Transverse colon (tissue), 4 donors: ENCODE measurements at regions of chr6 and their contacts with region 1.

Region 1: GRCh38 chr6:52664186-52664990 is 6.5 kb upstream of the TMEM14A start:
- DNase-seq: peak; percentile 94
- H3K4me3 ChIP-seq: peak overlapping the region; percentile 55 to 85 (median 77)
- H3K27ac ChIP-seq: peak overlapping the region; percentile 83 to 90 (median 85)
- H3K4me1 ChIP-seq: peaks cover 0 to 24% (median 18%) of the 10 kb centered on the region in 4 donors
- H3K27me3 ChIP-seq: no peaks in the 10 kb centered on the region
- CTCF ChIP-seq: no peak
- EP300 ChIP-seq: no peak
- POLR2A ChIP-seq: peak; percentile 94

Region 2: GRCh38 chr6:52263709-52264540 is 400.5 kb before region 1 on chr6:
- in situ Hi-C with region 1: loop called in 1 of 4 experiments (anchors 25 kb)
- intact Hi-C with region 1: no loop called
- DNase-seq: peak; percentile 58
- H3K4me3 ChIP-seq: no peak overlapping the region
- H3K27ac ChIP-seq: no peak overlapping the region
- H3K4me1 ChIP-seq: no peaks in the 10 kb centered on the region
- H3K27me3 ChIP-seq: no peaks in the 10 kb centered on the region
- CTCF ChIP-seq: peak; percentile 73 to 95 (median 91)
- EP300 ChIP-seq: no peak
- POLR2A ChIP-seq: no peak

Region 3: DNA sequence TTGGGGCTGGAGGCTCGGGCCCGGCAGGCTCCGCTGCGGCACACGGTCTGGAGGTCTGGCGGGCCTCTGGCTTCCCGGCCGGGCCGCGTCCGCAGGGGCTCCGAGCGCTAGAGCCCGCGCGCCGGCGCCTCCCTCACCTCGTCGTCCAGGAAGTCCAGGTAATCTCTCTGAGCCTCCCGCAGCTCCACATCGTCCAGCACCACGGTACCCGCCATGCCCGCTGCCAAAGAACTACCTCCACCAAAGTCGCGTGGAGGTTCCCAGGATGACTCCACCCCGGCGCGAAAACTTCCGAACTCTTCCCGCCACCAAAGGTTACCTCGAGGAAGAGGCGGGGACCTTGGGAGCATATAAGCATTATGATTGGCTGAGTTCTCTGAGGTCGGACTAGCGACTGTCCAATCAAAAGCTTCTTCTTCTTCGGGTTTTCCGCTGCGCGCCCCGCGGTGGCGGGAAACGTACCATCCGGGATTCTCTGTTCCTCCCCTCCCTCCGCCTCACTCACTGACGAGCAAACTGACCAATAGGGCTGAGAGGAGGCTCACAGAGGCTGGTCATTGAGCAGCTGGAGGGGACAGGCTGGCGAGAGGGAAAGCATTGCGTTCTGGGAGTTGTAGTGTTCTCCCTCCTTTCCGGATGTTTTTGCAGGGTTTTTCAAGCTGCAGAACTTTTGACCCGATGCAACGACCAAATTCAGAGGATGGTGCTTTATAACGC is 379.8 kb before region 1 on chr6 and contains the start of gene MCM3:
- in situ Hi-C with region 1: loop called in 3 of 4 experiments (anchors 5 to 25 kb)
- intact Hi-C with region 1: loop called (anchors 10 kb)
- DNase-seq: peak; percentile 98
- H3K4me3 ChIP-seq: peak within 1 kb of the TSS; percentile 57 to 97 (median 73)
- H3K27ac ChIP-seq: peak within 1 kb of the TSS; percentile 73 to 90 (median 82)
- H3K4me1 ChIP-seq: peaks cover 5 to 35% (median 17%) of the 10 kb centered on the region in 4 donors
- H3K27me3 ChIP-seq: no peaks in the 10 kb centered on the region
- CTCF ChIP-seq: peak in 3 of 5 experiments; percentile 5 to 57 (median 47)
- EP300 ChIP-seq: no peak
- POLR2A ChIP-seq: peak; percentile 29
- total RNA-seq, gene MCM3: 13.5 to 27.3 (median 24.2) TPM

Region 4: DNA sequence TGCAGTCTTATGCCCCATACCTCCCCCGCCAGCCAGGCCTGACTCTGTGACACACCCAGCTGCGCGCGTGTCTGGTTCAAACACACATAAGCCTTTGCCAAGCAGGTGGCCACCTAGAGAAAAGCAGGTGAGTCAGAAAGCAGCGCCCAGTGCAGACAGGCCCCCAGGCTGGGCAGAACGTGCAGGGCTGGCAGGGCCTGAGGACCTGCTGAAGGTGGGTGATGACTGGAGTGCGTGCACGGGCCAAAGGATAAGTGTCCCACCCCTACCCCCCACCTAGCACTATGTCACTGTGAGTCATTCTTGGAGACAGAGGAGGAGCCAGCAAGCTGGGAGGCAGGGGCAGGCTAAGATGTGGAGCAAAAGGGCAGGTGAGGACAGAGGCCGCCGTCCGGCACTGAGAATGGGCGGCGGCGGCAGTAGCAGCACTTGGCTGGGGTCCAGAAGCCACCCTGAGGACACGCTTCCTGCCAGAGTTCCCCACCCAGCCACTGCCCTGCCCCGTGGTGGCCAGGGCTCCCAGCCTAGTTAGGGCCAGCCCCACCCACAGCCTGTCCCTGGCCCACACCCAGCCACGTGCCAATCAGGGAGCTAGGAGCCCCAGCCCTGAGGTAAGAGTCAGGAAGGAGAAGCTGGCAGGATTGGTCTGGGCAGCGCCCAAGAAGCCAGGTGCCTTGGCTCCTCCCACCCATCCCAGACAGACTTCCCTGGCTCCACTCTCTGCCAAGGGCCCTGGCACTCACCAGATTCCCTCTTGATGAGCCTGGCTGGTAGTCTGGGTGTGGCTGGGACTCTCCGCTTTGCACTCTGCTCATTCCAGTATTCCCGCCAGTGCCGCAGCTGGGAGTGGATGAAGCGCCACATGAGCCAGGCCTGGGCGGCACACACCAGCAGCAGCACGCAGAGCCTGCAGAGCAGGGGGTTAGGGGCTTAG is 160.3 kb before region 1 on chr6:
- in situ Hi-C with region 1: no loop called
- intact Hi-C with region 1: loop called (anchors 10 kb)
- DNase-seq: peak; percentile 97
- H3K4me3 ChIP-seq: no peak overlapping the region
- H3K27ac ChIP-seq: peak overlapping the region; percentile 63 to 82 (median 72)
- H3K4me1 ChIP-seq: peaks cover 12 to 37% (median 28%) of the 10 kb centered on the region in 4 donors
- H3K27me3 ChIP-seq: no peaks in the 10 kb centered on the region
- CTCF ChIP-seq: no peak
- EP300 ChIP-seq: peak; percentile 64
- POLR2A ChIP-seq: peak; percentile 19

Region 5: DNA sequence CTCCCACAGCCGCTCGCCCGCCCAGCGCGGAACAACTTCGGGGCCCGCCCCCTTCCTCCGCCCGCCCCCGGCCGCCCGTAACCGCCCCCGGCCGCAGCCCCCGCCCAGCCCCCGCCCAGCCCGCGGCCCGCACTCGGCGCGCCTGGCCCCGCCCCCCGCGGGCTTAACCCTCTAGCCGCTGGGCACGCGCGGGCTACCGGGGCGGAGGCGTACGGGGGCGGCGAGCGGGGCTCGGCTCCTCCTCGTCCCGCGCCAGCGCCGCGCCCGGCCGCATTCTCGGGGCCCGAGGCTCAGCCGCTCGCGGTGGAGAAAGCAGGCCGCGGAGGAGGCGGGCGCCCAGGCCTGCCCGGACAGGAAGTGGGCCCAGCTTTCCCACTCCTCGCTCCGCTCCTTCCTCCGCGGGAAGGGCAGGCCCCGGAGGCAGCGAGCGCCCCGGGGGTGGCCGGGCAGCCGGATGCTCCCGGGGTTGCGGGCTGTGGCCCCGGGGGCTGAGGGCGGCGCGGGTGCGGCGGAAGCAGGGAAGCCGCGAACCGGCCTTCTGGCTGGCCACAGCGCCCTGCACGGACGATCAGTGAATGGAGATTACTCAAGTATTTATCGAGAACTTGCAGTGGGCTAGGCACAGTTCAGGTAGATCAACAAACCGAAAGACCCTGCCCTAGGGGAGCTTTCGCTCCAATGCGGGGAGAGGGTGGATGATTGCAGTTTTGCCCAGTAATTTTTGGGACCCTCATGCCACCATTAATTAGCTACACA is 87.2 kb before region 1 on chr6 and contains the start of gene TRAM2:
- in situ Hi-C with region 1: no loop called
- intact Hi-C with region 1: loop called (anchors 5 kb)
- DNase-seq: peak; percentile 89
- H3K4me3 ChIP-seq: peak within 1 kb of the TSS; percentile 65 to 82 (median 78)
- H3K27ac ChIP-seq: peak within 1 kb of the TSS; percentile 97 to 98 (median 98)
- H3K4me1 ChIP-seq: peaks cover 19 to 50% (median 40%) of the 10 kb centered on the region in 4 donors
- H3K27me3 ChIP-seq: no peaks in the 10 kb centered on the region
- CTCF ChIP-seq: peak in 1 of 5 experiments; percentile 30
- EP300 ChIP-seq: no peak
- POLR2A ChIP-seq: peak; percentile 71
- total RNA-seq, gene TRAM2: 8.4 to 15.4 (median 11.7) TPM

Region 6: GRCh38 chr6:52598123-52598823 is 66.1 kb before region 1 on chr6:
- in situ Hi-C with region 1: loop called in 1 of 4 experiments (anchors 5 kb)
- intact Hi-C with region 1: no loop called
- DNase-seq: peak; percentile 52
- H3K4me3 ChIP-seq: peak overlapping the region in 1 of 4 donors; percentile 3
- H3K27ac ChIP-seq: peak overlapping the region in 2 of 4 donors; percentile 13 to 18
- H3K4me1 ChIP-seq: peaks cover 8 to 32% (median 23%) of the 10 kb centered on the region in 4 donors
- H3K27me3 ChIP-seq: no peaks in the 10 kb centered on the region
- CTCF ChIP-seq: peak; percentile 63 to 80 (median 64)
- EP300 ChIP-seq: no peak
- POLR2A ChIP-seq: no peak